ENCODE measurements at regions of chr6 and their contacts with region 1.

Region 1: GRCh38 chr6:32853541-32854375 is at the starts of genes PSMB9 and TAP1:
- DNase-seq: peak; percentile 98
- H3K4me3 Mint-ChIP-seq: peak within 1 kb of the TSS; percentile 97
- H3K27ac Mint-ChIP-seq: peak within 1 kb of the TSS; percentile 96
- H3K4me1 Mint-ChIP-seq: peaks cover 59% of the 10 kb centered on the region
- H3K27me3 Mint-ChIP-seq: no peaks in the 10 kb centered on the region
- total RNA-seq, gene PSMB9: 249 and 257 TPM in 2 replicates
- total RNA-seq, gene TAP1: 275 and 283 TPM in 2 replicates

Region 2: DNA sequence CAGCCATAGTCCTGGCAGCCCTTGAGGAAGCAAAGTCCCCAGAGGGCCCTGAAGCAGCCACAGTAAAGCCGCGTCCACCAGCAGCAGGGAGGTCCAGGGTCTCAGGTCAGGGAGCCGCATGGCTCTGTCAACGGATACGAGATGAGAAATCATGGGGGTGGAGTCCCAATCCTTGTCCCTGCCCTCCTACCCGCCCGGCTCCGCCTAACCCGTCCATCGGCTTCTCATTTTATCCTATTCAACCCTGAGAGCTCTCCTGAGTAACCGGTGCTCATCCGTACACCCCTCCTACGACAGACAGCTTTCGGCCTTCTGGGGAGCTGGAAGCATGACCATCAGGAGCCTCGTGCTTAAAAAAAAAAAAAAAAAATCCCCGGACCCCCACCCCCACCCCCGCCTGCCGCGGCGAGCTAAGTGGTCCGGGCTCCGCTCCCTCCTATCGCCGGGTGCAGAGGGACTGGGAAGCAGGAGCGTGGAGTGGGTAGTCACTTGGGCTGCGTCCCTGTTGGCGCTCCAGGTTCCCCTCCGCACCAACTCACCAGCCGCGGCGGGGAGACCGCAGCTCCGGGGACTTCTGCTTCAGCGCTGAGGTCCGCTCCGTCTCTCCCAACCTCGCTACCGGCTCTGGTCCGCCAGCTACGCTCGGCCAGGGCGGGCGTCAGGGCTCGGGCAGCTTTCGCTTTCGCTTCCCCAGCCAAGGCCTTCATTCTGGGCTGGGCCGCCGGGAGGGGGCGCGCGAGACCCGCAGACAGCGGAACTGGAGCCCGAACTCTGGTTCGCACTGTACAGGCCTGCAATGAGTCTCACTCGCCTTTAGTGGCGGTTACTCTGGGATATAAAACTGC is 15.4 kb before region 1 on chr6 and contains the start of gene TAP2:
- intact Hi-C with region 1: loop called (anchors 1 kb)
- DNase-seq: peak; percentile 93
- H3K4me3 Mint-ChIP-seq: peak within 1 kb of the TSS; percentile 83
- H3K27ac Mint-ChIP-seq: peak within 1 kb of the TSS; percentile 99
- H3K4me1 Mint-ChIP-seq: peaks cover 75% of the 10 kb centered on the region
- H3K27me3 Mint-ChIP-seq: no peaks in the 10 kb centered on the region
- total RNA-seq, gene TAP2: 152 and 163 TPM in 2 replicates

Measured in activated CD4-positive, alpha-beta T cell treated with anti-CD3 and anti-CD28 coated beads, Interleukin-2, amount 10 ng/mL, durations not matched to agents 24 days and 14 days (primary cell).